ENCODE measurements at regions of chr2 and their contacts with region 1.

Region 1: DNA sequence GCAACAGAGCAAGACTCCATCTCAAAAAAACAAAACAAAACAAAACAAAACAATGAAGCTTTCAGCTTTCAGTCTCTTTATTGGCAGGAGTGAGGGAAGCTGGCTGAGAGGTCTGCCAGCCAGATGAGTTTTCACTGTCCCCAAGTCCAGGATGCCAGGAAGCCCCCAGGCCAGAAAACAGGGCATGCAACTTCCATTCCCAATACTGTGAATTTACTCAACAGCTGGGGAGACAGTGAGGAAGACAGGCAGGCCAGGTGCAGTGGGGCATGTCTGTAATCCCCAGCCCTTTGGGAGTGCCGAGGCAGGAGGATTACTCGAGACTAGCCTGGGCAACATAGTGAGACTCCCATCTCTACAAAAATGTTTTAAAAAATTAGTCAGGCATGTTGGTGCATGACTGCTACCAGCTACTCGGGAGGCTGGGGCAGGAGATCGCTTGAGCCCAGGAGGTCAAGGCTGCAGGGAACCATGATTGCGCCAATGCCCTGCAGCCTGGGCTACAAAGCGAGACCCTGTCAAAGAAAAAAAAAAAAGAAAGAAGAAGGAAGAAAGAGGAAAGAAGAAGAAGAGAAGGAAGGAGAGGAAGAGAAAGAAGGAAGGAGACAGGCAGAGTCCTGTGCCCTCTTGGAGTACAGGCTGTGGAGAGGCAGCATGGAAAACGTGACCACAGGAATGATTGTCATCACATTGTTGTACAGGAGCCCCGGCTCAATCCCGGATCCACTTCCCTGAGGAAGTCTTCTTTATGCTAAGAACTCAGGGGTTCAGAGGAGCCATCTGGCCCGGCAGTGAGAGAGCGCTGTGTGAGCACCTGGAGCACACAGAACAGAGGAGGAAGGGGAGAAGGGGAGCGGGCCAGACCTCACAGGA is 29.2 kb upstream of the POMC start:
- DNase-seq: no peak
- H3K4me3 ChIP-seq: no peak overlapping the region
- H3K27ac ChIP-seq: no peak overlapping the region
- H3K27me3 ChIP-seq: no peaks in the 10 kb centered on the region
- CTCF ChIP-seq: no peak

Region 2: DNA sequence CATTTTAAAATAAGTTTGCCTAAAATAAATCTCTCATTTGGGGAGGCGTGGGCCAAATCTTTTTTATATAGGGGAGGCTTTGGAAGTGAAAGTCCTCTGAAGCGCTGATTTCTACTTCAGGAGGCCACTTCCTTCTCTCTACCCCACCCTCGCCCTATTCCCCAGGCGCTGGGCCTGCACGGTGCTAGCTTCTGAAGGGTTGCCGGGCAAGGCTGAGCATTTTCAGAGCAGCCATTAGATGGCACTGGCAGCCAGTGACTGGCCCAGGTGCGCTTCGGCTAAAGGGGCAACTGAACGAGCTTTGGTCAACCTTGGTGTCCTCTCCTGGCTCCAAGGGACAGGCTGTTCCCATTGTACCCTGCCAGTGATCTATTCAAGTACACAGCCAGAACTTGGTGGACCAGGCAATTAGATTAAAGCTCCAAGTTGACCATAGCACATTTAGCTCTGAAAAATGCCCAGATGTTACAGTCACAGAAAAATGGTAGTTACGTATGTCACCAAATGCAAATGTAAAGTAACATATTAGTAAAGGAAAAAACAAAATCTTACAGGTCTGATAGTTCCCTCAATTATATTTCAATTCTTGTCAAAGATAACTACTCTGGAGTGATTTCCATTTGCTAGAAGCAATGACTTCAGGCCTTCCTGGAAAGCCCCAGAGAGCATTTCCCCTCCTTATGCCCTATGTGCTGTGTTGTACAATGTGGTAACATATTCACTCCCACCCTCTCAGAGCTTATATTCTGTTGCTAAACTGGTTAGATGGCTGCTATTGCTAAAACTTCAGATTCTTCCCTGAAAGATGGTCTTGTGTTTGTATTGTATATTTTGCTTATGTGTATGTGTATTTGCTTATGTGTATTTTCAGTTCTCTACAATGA is 31.3 kb before region 1 on chr2:
- CTCF ChIA-PET with region 1: interaction called, 15 read pairs
- POLR2A ChIA-PET with region 1: no interaction called
- DNase-seq: no peak
- H3K4me3 ChIP-seq: no peak overlapping the region
- H3K27ac ChIP-seq: no peak overlapping the region
- H3K27me3 ChIP-seq: peaks cover 75% of the 10 kb centered on the region
- CTCF ChIP-seq: no peak

Region 3: GRCh38 chr2:25230948-25231311 is 33.4 kb after region 1 on chr2:
- CTCF ChIA-PET with region 1: no interaction called
- POLR2A ChIA-PET with region 1: no interaction called
- DNase-seq: no peak
- H3K4me3 ChIP-seq: no peak overlapping the region
- H3K27ac ChIP-seq: no peak overlapping the region
- H3K27me3 ChIP-seq: no peaks in the 10 kb centered on the region
- CTCF ChIP-seq: no peak

Region 4: GRCh38 chr2:25257032-25257552 is 59.5 kb after region 1 on chr2:
- CTCF ChIA-PET with region 1: no interaction called
- POLR2A ChIA-PET with region 1: no interaction called
- DNase-seq: peak; percentile 43
- H3K4me3 ChIP-seq: no peak overlapping the region
- H3K27ac ChIP-seq: no peak overlapping the region
- H3K27me3 ChIP-seq: no peaks in the 10 kb centered on the region
- CTCF ChIP-seq: no peak

Region 5: GRCh38 chr2:25362049-25362433 is 164.5 kb after region 1 on chr2:
- CTCF ChIA-PET with region 1: no interaction called
- POLR2A ChIA-PET with region 1: no interaction called
- DNase-seq: peak; percentile 76
- H3K4me3 ChIP-seq: peak overlapping the region; percentile 59
- H3K27ac ChIP-seq: no peak overlapping the region
- H3K27me3 ChIP-seq: peaks cover 2% of the 10 kb centered on the region
- CTCF ChIP-seq: peak; percentile 95

Measured in AG04450 (cell line).